Activated CD8-positive, alpha-beta memory T cell treated with anti-CD3 and anti-CD28 coated beads, Interleukin-2, amount 10 ng/mL, durations not matched to agents 7 days and 5 days (primary cell): ENCODE measurements at regions of chr19 and their contacts with region 1.

Region 1: GRCh38 chr19:6218491-6219162 is 61.1 kb downstream of the MLLT1 start:
- DNase-seq: peak; percentile 90
- ATAC-seq: peak; percentile 78
- H3K4me3 Mint-ChIP-seq: no peak overlapping the region
- H3K27ac Mint-ChIP-seq: peak overlapping the region; percentile 37
- H3K4me1 Mint-ChIP-seq: no peaks in the 10 kb centered on the region
- H3K27me3 Mint-ChIP-seq: no peaks in the 10 kb centered on the region

Region 2: DNA sequence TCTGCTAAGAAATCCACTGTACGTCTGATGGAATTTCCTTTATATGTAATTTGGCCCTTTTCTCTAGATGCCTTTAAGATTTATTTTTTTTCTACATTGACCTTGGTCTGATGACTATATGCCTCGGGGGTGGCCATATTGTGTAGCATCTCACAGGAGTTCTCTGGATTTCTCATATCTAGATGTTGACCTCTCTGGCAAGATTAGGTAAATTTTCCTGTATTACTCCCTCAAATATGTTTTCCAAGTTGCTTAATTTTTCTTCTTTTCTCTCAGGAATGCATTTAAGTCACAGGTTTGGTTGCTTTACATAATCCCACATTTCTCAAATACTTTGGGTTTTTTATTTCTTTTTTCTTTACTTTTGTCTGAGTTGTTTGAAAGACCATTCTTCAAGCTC is 47.1 kb before region 1 on chr19:
- CTCF ChIA-PET with region 1: no interaction called
- DNase-seq: no peak
- ATAC-seq: no peak
- H3K4me3 Mint-ChIP-seq: no peak overlapping the region
- H3K27ac Mint-ChIP-seq: no peak overlapping the region
- H3K4me1 Mint-ChIP-seq: no peaks in the 10 kb centered on the region
- H3K27me3 Mint-ChIP-seq: peaks cover 43% of the 10 kb centered on the region

Region 3: GRCh38 chr19:6199240-6199983 is 19.2 kb before region 1 on chr19:
- CTCF ChIA-PET with region 1: interaction called, 12 read pairs
- DNase-seq: peak; percentile 99
- ATAC-seq: peak; percentile 96
- H3K4me3 Mint-ChIP-seq: peak overlapping the region; percentile 99
- H3K27ac Mint-ChIP-seq: peak overlapping the region; percentile 89
- H3K4me1 Mint-ChIP-seq: peaks cover 22% of the 10 kb centered on the region
- H3K27me3 Mint-ChIP-seq: no peaks in the 10 kb centered on the region

Region 4: DNA sequence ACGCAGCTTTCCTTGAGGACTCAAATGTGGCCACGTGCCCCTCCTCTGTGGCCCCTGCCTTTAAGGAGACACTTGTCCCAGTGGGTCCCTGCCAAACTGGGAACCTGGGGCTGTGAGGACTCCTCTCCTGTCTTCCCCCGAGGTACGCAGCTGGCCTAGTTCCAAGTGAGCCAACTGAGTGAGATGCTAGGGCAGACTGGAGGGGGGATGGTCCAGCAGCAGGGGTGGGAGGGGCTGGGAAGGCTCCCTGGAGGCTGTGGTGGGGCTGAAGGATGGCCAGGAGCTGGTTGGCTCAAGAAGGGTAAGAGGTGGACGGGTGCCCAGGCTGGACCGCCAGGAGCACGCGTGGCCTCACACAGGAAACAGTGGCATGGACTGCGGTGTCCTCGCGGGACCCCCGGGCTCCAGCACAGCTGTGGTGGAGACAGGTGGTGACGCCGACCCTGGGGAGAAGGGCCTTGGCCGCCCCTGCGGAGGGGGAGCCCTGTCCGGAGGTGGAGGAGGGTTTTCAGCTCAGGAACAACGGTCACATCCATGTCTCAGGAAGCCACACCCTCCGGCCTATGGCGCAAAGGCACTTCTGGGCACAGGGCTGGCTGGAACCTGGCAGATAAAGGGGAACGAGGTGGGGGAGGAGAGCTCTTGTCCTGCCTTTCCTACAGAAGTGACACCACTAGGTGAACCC is 15.3 kb after region 1 on chr19:
- CTCF ChIA-PET with region 1: interaction called, 25 read pairs
- DNase-seq: no peak
- ATAC-seq: no peak
- H3K4me3 Mint-ChIP-seq: no peak overlapping the region
- H3K27ac Mint-ChIP-seq: no peak overlapping the region
- H3K4me1 Mint-ChIP-seq: peaks cover 17% of the 10 kb centered on the region
- H3K27me3 Mint-ChIP-seq: no peaks in the 10 kb centered on the region

Region 5: GRCh38 chr19:6297202-6297601 is 78.6 kb after region 1 on chr19:
- CTCF ChIA-PET with region 1: interaction called, 34 read pairs
- DNase-seq: no peak
- ATAC-seq: no peak
- H3K4me3 Mint-ChIP-seq: no peak overlapping the region
- H3K27ac Mint-ChIP-seq: no peak overlapping the region
- H3K4me1 Mint-ChIP-seq: no peaks in the 10 kb centered on the region
- H3K27me3 Mint-ChIP-seq: no peaks in the 10 kb centered on the region